ENCODE measurements at regions of chr11 and their contacts with region 1.

Region 1: GRCh38 chr11:95067039-95067840 is 521 bp downstream of the SRSF8 start:
- DNase-seq: no peak
- ATAC-seq: peak; percentile 80
- H3K4me3 ChIP-seq: peak overlapping the region; percentile 99
- H3K27ac ChIP-seq: peak overlapping the region; percentile 75
- H3K4me1 ChIP-seq: 0 out of 2 replicates have a peak, but pooled peaks cover 3% of the 10 kb centered on the region
- H3K27me3 ChIP-seq: no peaks in the 10 kb centered on the region
- CTCF ChIP-seq: peak; percentile 40 to 63 (median 54)
- EP300 ChIP-seq: no peak
- POLR2A ChIP-seq: peak; percentile 90
- RAD21 ChIP-seq: 0 out of 2 replicates have a peak, but pooled peaks have one; percentile 15

Region 2: DNA sequence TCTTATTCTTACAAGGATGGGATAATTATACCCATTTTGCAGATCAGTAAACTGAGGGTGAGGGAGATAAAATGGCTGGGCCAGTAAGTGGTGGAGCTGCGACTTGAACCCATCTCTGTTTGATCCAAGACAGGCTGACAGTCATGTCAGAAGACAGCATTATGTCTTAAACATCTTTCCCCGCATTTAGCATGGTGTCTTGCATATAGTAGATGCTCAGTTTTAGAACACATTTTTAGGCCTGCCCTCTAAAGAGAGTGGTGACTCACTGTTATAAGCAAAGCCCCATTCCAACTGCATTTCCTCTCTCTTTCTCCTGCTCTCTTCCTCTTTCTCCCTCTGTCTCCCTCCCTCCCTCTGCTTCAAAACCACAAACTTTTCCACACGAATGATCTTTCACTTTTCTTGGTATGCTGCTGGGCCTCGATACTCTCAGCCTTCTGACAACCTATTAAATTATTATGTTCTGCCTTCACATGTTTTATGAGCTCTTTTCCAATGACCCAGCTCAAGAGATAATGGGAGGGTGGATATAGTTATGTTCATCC is 119.1 kb before region 1 on chr11:
- CTCF ChIA-PET with region 1: no interaction called
- POLR2A ChIA-PET with region 1: no interaction called
- RAD21 ChIA-PET with region 1: no interaction called
- SMC1A ChIA-PET with region 1: no interaction called
- in situ Hi-C with region 1: no loop called
- intact Hi-C with region 1: no loop called
- DNase-seq: no peak
- ATAC-seq: no peak
- H3K4me3 ChIP-seq: no peak overlapping the region
- H3K27ac ChIP-seq: no peak overlapping the region
- H3K4me1 ChIP-seq: no peaks in the 10 kb centered on the region
- H3K27me3 ChIP-seq: no peaks in the 10 kb centered on the region
- CTCF ChIP-seq: no peak
- EP300 ChIP-seq: no peak
- POLR2A ChIP-seq: no peak
- RAD21 ChIP-seq: no peak

Region 3: DNA sequence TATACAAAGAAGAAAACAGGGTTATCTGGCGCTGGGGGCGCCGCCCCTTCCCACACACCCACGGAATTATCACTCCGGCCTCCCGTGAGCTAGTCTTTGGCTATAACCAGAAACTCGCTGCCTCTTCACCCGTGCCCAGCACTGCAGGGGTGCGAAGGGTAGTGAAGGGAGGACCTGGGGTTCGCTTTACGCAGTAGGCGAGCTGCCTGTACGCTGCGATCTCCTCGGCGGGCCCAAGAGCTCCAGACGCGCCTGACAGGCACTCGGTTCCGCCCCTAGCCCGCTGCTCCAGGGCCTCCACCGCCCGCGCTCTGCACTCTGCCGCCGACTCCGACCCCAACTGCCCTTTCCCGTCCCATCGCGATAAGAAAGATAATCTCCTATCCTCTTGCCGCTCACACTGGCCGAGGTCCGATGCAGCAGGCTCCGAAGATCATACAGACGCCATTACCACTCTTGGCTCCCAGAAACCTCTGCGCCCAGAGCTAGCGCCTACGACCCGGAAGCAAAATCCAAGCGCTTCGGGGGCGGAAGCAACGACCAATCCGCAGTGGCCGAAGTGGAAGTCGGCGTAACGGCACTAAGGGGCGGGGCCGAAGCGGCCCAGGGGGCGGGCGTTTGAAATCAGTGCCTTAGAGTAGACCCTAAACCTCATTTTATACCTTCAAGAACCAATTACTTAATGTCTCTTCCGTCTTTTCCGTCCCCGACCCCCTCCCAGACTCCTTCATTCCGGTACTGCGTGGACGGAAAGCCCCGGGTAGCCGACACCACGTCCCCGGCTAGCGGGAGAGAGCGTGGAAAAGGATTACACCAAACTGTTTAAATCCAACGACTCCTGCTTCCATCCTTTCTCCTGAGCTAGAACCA is 93.9 kb before region 1 on chr11 and contains the starts of genes CWC15 and KDM4D:
- CTCF ChIA-PET with region 1: interaction called, 18 read pairs
- POLR2A ChIA-PET with region 1: interaction called, 17 read pairs
- RAD21 ChIA-PET with region 1: interaction called, 21 read pairs
- SMC1A ChIA-PET with region 1: interaction called, 12 read pairs
- in situ Hi-C with region 1: no loop called
- intact Hi-C with region 1: loop called (anchors 5 kb)
- DNase-seq: peak; percentile 62
- ATAC-seq: peak; percentile 99
- H3K4me3 ChIP-seq: peak within 1 kb of the TSS; percentile 95
- H3K27ac ChIP-seq: peak within 1 kb of the TSS; percentile 78
- H3K4me1 ChIP-seq: no peaks in the 10 kb centered on the region
- H3K27me3 ChIP-seq: no peaks in the 10 kb centered on the region
- CTCF ChIP-seq: no peak
- EP300 ChIP-seq: no peak
- POLR2A ChIP-seq: peak; percentile 96
- RAD21 ChIP-seq: 0 out of 2 replicates have a peak, but pooled peaks have one; percentile 1
- polyA plus RNA-seq, gene CWC15: 122 to 142 TPM
- polyA plus RNA-seq, gene KDM4D: 0.63 to 0.69 TPM

Region 4: DNA sequence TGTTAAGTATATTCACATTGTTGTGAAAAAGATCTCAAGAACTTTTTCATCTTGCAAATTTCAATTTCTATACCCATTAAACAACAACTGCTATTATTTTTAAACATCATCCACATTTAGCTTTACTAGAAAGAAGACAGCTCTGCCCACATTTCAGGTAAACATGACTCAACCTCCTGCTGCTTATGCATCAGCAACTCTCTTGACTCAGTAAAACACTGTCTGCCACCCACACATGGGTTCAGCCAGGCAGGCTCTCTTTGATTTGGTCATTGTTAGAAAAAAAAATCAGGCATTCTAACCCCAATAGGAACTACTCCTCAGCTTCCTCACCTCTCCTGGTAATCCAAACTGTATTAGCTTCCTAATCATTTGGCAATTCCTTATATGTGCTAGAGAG is 17.3 kb after region 1 on chr11:
- CTCF ChIA-PET with region 1: interaction called, 296 read pairs
- POLR2A ChIA-PET with region 1: interaction called, 139 read pairs
- RAD21 ChIA-PET with region 1: interaction called, 244 read pairs
- SMC1A ChIA-PET with region 1: interaction called, 315 read pairs
- in situ Hi-C with region 1: no loop called
- intact Hi-C with region 1: loop called (anchors 1 kb)
- DNase-seq: no peak
- ATAC-seq: peak; percentile 50
- H3K4me3 ChIP-seq: no peak overlapping the region
- H3K27ac ChIP-seq: no peak overlapping the region
- H3K4me1 ChIP-seq: peaks cover 5% of the 10 kb centered on the region; the same call in 1 of the 2 replicates
- H3K27me3 ChIP-seq: no peaks in the 10 kb centered on the region
- CTCF ChIP-seq: no peak
- EP300 ChIP-seq: peak in 1 of 2 experiments; percentile 24; a peak in 1 of 4 replicates
- POLR2A ChIP-seq: no peak
- RAD21 ChIP-seq: no peak

Region 5: DNA sequence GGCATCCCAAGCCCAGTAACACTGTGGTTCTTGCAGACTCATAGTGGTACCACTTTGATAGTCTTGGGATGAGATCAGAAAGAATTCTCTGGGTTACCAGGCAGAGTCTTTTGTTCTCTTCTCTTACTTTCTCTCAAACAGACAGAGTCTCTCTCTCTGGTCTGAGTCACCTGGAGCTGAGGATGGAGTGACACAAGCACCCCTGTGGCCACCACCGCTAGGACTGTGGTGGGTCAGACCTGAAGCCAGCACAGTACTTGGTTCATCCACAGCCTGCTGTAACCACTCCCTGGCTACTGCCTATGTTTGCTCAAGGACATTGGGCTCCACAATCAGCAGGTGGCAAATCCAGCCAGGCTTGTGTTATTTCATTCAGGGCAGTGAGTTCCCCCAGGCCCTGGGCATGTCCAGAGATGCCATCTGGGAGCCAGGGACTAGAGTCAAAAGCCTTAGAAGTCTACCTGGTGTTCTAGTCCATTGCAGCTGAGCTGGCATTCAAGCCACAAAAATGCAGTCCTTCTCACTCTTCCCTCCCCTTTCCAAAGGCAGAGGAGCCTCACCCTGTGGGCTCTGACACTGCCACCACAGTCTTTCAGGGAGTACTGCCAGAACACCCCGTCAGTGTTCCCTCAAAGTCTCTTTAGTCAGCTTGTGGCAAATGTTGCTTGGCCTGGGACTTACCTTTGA is 52.3 kb after region 1 on chr11:
- CTCF ChIA-PET with region 1: interaction called, 10 read pairs
- POLR2A ChIA-PET with region 1: interaction called, 3 read pairs
- RAD21 ChIA-PET with region 1: interaction called, 4 read pairs
- SMC1A ChIA-PET with region 1: interaction called, 5 read pairs
- in situ Hi-C with region 1: no loop called
- intact Hi-C with region 1: no loop called
- DNase-seq: no peak
- ATAC-seq: no peak; the same call in 2 of the 3 replicates
- H3K4me3 ChIP-seq: no peak overlapping the region
- H3K27ac ChIP-seq: no peak overlapping the region
- H3K4me1 ChIP-seq: no peaks in the 10 kb centered on the region
- H3K27me3 ChIP-seq: no peaks in the 10 kb centered on the region
- CTCF ChIP-seq: no peak
- EP300 ChIP-seq: no peak
- POLR2A ChIP-seq: no peak
- RAD21 ChIP-seq: no peak

Region 6: DNA sequence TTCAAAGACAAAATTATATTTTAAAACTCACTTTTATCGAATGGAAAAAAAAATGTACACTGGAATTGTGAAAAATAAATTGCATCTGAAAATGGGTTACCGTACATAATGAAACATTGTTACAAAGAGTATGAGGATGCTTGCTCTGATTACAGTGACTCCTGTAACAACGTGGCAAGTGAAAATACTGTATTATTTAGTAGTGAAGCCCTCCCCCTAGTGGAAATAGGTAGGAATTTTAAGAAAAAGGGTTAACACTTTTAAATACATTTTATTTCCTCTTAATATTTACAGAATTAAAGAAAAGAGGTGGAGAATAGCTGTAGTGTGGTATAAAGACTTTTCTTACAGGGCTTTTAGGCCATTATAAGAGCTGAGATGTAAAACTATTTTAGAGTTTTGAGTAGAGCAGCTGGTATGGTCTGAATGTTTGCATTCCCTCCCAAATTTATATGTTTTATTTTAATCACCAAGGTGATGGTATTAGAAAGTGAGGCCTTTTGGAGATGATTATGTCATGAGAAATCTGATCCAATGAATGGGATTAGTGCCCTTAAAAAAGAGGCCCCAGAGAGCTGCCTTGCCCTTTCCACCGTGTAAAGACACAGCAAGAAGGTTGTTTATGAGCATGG is 697.1 kb after region 1 on chr11:
- CTCF ChIA-PET with region 1: interaction called, 4 read pairs
- POLR2A ChIA-PET with region 1: interaction called, 3 read pairs
- RAD21 ChIA-PET with region 1: no interaction called
- SMC1A ChIA-PET with region 1: interaction called, 5 read pairs
- in situ Hi-C with region 1: no loop called
- intact Hi-C with region 1: loop called (anchors 5 kb)
- DNase-seq: no peak
- ATAC-seq: peak; percentile 91
- H3K4me3 ChIP-seq: no peak overlapping the region
- H3K27ac ChIP-seq: no peak overlapping the region
- H3K4me1 ChIP-seq: no peaks in the 10 kb centered on the region
- H3K27me3 ChIP-seq: no peaks in the 10 kb centered on the region
- CTCF ChIP-seq: peak; percentile 43 to 66 (median 46); a peak in 5 of 6 replicates
- EP300 ChIP-seq: no peak
- POLR2A ChIP-seq: no peak
- RAD21 ChIP-seq: peak; percentile 83